ENCODE measurements at regions of chr1 and their contacts with region 1.

Region 1: DNA sequence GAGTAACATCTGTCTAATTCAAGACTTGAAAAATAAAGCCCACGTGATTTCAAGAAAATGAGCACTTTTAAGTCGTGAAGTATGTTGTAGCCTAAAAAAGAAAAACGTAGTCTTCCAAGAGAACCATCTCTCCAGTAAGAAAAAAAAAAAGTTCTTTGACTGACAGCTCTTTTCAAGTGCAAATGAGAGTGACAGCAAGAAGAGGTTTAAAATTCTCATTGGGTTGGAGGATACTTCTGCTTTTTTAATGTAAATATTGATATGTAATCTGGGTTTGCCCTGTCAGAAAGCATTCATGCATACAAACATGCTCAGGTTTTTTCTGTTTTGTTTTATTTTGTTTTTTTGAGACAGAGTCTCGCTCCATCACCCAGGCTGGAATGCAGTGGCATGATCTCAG is 32.3 kb upstream of the PRDM2 start:
- DNase-seq: no peak
- H3K4me3 ChIP-seq: no peak overlapping the region
- H3K27ac ChIP-seq: no peak overlapping the region
- H3K4me1 ChIP-seq: no peaks in the 10 kb centered on the region
- H3K27me3 ChIP-seq: no peaks in the 10 kb centered on the region
- CTCF ChIP-seq: no peak
- POLR2A ChIP-seq: no peak

Region 2: GRCh38 chr1:13679651-13680050 is 12.0 kb after region 1 on chr1:
- CTCF ChIA-PET with region 1: no interaction called
- POLR2A ChIA-PET with region 1: no interaction called
- dilution Hi-C with region 1: no loop called
- intact Hi-C with region 1: no loop called
- DNase-seq: no peak
- H3K4me3 ChIP-seq: no peak overlapping the region
- H3K27ac ChIP-seq: no peak overlapping the region
- H3K4me1 ChIP-seq: no peaks in the 10 kb centered on the region
- H3K27me3 ChIP-seq: no peaks in the 10 kb centered on the region
- CTCF ChIP-seq: no peak
- POLR2A ChIP-seq: no peak

Region 3: DNA sequence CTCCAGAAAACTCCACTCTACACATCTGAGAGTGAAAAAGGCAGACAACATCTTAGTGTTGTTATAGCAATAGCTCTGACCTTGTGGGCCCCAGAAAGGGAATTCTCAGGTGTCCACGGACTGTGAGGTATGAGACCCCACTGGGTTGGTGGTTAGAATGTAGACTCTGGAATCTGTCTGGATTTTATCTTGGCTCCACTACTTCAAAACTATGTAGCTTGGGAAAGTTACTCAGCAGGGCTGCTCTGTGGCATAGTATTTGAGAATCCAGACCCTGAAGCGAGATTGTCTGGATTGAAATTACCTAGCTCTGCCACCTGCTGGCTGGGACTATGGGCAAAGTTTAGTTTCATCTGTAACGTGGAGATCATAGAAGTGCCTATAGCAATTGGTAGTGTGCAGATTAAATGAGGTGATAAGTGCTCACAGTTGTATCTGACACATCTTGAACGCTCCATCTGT is 58.1 kb after region 1 on chr1:
- CTCF ChIA-PET with region 1: interaction called, 10 read pairs
- POLR2A ChIA-PET with region 1: no interaction called
- dilution Hi-C with region 1: no loop called
- intact Hi-C with region 1: loop called (anchors 1 kb)
- DNase-seq: peak; percentile 33
- H3K4me3 ChIP-seq: no peak overlapping the region
- H3K27ac ChIP-seq: no peak overlapping the region
- H3K4me1 ChIP-seq: peaks cover 2% of the 10 kb centered on the region
- H3K27me3 ChIP-seq: no peaks in the 10 kb centered on the region
- CTCF ChIP-seq: peak in 1 of 2 donors; percentile 44
- POLR2A ChIP-seq: no peak

Measured in endothelial cell of umbilical vein (primary cell).